Esophagus squamous epithelium (tissue), 5 donors: ENCODE measurements at regions of chr9 and their contacts with region 1.

Region 1: DNA sequence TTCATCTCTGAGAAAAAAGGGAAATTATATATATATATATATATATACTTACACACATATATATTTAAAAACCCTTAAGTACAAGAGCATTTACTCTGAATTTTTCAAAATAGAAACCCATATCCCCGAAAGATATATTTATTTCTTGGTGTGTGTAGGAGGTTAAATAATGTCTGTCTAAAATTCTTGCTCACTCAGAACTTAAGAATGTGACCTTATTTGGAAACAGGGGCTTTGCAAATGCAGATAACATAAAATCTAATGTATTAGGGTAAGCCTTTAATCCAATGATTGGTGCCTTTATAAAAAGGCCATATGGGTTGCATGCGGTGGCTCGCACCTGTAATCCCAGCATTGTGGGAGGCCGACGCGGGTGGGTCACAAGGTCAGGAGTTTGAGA is 517.3 kb upstream of the TLE4 start:
- DNase-seq: no peak
- H3K4me3 ChIP-seq: no peak overlapping the region
- H3K27ac ChIP-seq: no peak overlapping the region
- H3K4me1 ChIP-seq: no peaks in the 10 kb centered on the region
- H3K27me3 ChIP-seq: no peaks in the 10 kb centered on the region
- CTCF ChIP-seq: no peak
- POLR2A ChIP-seq: no peak

Region 2: GRCh38 chr9:79079212-79079611 is 24.7 kb after region 1 on chr9:
- intact Hi-C with region 1: loop called (anchors 2 kb)
- DNase-seq: no peak
- H3K4me3 ChIP-seq: no peak overlapping the region
- H3K27ac ChIP-seq: no peak overlapping the region
- H3K4me1 ChIP-seq: no peaks in the 10 kb centered on the region
- H3K27me3 ChIP-seq: no peaks in the 10 kb centered on the region
- CTCF ChIP-seq: no peak
- POLR2A ChIP-seq: no peak